ENCODE measurements at regions of chr17 and their contacts with region 1.

Region 1: GRCh38 chr17:77957857-77958715 is at the start of gene TNRC6C:
- DNase-seq: peak; percentile 100
- ATAC-seq: peak; percentile 92
- H3K4me3 Mint-ChIP-seq: peak within 1 kb of the TSS; percentile 92
- H3K27ac Mint-ChIP-seq: peak within 1 kb of the TSS; percentile 95
- H3K4me1 Mint-ChIP-seq: peaks cover 34% of the 10 kb centered on the region
- H3K27me3 Mint-ChIP-seq: peaks cover 4% of the 10 kb centered on the region
- total RNA-seq, gene TNRC6C: 19.6 to 20.3 TPM

Region 2: GRCh38 chr17:77471984-77472461 is 486.1 kb before region 1 on chr17:
- CTCF ChIA-PET with region 1: no interaction called
- POLR2A ChIA-PET with region 1: no interaction called
- intact Hi-C with region 1: loop called in 1 of 2 experiments (anchors 5 kb)
- DNase-seq: no peak
- ATAC-seq: no peak
- H3K4me3 Mint-ChIP-seq: peak overlapping the region; percentile 70
- H3K27ac Mint-ChIP-seq: peak overlapping the region; percentile 86
- H3K4me1 Mint-ChIP-seq: peaks cover 96% of the 10 kb centered on the region
- H3K27me3 Mint-ChIP-seq: no peaks in the 10 kb centered on the region

Region 3: DNA sequence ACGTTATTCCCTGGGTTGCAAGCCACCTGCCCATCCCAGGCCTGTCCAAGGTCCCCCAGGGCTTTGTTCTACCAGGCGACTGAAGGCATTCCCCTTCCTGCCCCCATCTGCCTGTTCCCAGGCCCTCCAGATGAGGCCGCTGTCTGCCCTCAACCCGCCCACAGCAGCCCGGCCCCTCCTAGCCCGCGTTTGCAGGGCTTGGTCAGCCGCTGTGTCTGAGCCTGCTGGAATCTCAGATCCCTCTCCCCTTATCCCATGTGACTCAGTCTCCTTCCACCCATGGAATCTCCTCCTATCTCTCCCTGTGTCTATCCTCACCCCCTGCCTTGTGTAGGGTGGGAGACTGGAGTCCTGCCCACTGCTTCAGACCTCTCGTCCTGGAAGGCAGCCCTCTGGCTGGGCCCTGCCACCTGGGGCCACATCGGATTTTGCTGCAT is 185.6 kb before region 1 on chr17:
- CTCF ChIA-PET with region 1: interaction called, 3 read pairs
- POLR2A ChIA-PET with region 1: no interaction called
- intact Hi-C with region 1: loop called in 1 of 2 experiments (anchors 5 kb)
- DNase-seq: peak; percentile 84
- ATAC-seq: peak; percentile 95
- H3K4me3 Mint-ChIP-seq: no peak overlapping the region
- H3K27ac Mint-ChIP-seq: no peak overlapping the region
- H3K4me1 Mint-ChIP-seq: peaks cover 9% of the 10 kb centered on the region
- H3K27me3 Mint-ChIP-seq: no peaks in the 10 kb centered on the region

Region 4: GRCh38 chr17:77881545-77881944 is 76.5 kb before region 1 on chr17:
- CTCF ChIA-PET with region 1: interaction called, 3 read pairs
- POLR2A ChIA-PET with region 1: interaction called, 4 read pairs
- intact Hi-C with region 1: loop called (anchors 2 kb)
- DNase-seq: peak; percentile 78
- ATAC-seq: peak; percentile 40
- H3K4me3 Mint-ChIP-seq: peak overlapping the region; percentile 43
- H3K27ac Mint-ChIP-seq: peak overlapping the region; percentile 90
- H3K4me1 Mint-ChIP-seq: peaks cover 77% of the 10 kb centered on the region
- H3K27me3 Mint-ChIP-seq: no peaks in the 10 kb centered on the region

Region 5: GRCh38 chr17:78013683-78014467 is 55.8 kb after region 1 on chr17:
- CTCF ChIA-PET with region 1: interaction called, 15 read pairs
- POLR2A ChIA-PET with region 1: interaction called, 3 read pairs
- intact Hi-C with region 1: loop called (anchors 2 to 5 kb)
- DNase-seq: peak; percentile 62
- ATAC-seq: peak; percentile 80
- H3K4me3 Mint-ChIP-seq: no peak overlapping the region
- H3K27ac Mint-ChIP-seq: no peak overlapping the region
- H3K4me1 Mint-ChIP-seq: peaks cover 24% of the 10 kb centered on the region
- H3K27me3 Mint-ChIP-seq: no peaks in the 10 kb centered on the region

Region 6: GRCh38 chr17:78214706-78215061 is 256.6 kb after region 1 on chr17:
- CTCF ChIA-PET with region 1: no interaction called
- POLR2A ChIA-PET with region 1: no interaction called
- intact Hi-C with region 1: loop called in 1 of 2 experiments (anchors 1 kb)
- DNase-seq: no peak
- ATAC-seq: no peak
- H3K4me3 Mint-ChIP-seq: peak overlapping the region; percentile 89
- H3K27ac Mint-ChIP-seq: peak overlapping the region; percentile 78
- H3K4me1 Mint-ChIP-seq: peaks cover 5% of the 10 kb centered on the region
- H3K27me3 Mint-ChIP-seq: no peaks in the 10 kb centered on the region

Measured in activated CD4-positive, alpha-beta T cell treated with anti-CD3 and anti-CD28 coated beads for 36 hours (primary cell).